ENCODE measurements at regions of chr12 and their contacts with region 1.

Region 1: GRCh38 chr12:14167005-14167628 is 185.7 kb upstream of the GRIN2B start:
- DNase-seq: peak; percentile 73
- CTCF ChIP-seq: peak; percentile 95

Region 2: DNA sequence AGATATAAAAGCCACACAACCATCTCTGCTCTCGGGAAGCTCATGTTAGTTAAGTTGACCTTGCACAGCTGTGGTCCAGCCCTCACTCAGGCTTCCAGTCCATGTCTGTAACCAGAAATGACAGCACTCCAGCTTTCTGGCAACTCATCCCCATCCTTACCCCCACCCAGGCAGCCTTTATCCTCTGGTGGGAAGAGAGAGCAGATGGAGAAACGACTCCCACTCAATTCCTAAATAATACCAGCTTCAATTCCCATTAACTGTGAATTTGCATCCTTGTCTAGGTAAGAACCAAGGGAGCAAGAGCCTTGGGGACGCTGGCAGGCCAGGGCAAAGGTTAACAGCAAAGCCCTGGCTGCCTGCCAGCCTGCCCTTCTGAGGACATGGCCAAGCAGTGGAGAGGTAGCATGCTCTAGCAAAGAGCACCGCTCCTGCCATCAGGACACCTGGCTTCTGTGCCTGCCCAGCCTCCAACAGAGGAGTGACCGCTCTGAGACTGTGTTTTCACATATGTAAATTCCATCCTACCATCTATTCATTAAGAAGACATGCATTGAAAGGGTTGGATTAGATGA is 421.9 kb before region 1 on chr12:
- in situ Hi-C with region 1: no loop called
- DNase-seq: no peak
- CTCF ChIP-seq: no peak

Region 3: GRCh38 chr12:13864081-13864673 is 302.9 kb before region 1 on chr12:
- in situ Hi-C with region 1: loop called (anchors 25 kb)
- DNase-seq: peak; percentile 55
- CTCF ChIP-seq: peak; percentile 96

Measured in GM13977 (cell line).